Psoas muscle (tissue), 8 donors: ENCODE measurements at regions of chr17 and their contacts with region 1.

Region 1: GRCh38 chr17:63600569-63601438 is at the start of gene TACO1:
- DNase-seq: peak; percentile 84 to 90
- ATAC-seq: peak; percentile 96 to 97 (median 97)
- H3K4me3 ChIP-seq: peak within 1 kb of the TSS; percentile 98
- H3K27ac ChIP-seq: peak within 1 kb of the TSS; percentile 94
- H3K4me1 ChIP-seq: peaks cover 10% of the 10 kb centered on the region
- H3K27me3 ChIP-seq: no peaks in the 10 kb centered on the region
- CTCF ChIP-seq: no peak
- total RNA-seq, gene TACO1: 28.6 to 45.5 (median 41.5) TPM

Region 2: GRCh38 chr17:63445979-63446691 is 154.7 kb before region 1 on chr17 and contains the start of gene CYB561:
- intact Hi-C with region 1: loop called in 1 of 2 experiments (anchors 5 kb)
- DNase-seq: peak; percentile 81 to 88
- ATAC-seq: peak; percentile 73 to 84 (median 78)
- H3K4me3 ChIP-seq: peak within 1 kb of the TSS; percentile 80
- H3K27ac ChIP-seq: peak within 1 kb of the TSS; percentile 82
- H3K4me1 ChIP-seq: peaks cover 8% of the 10 kb centered on the region
- H3K27me3 ChIP-seq: peaks cover 0 to 14% (median 4%) of the 10 kb centered on the region in 3 donors
- CTCF ChIP-seq: peak; percentile 52
- total RNA-seq, gene CYB561: 1.5 to 4.2 (median 2.5) TPM

Region 3: DNA sequence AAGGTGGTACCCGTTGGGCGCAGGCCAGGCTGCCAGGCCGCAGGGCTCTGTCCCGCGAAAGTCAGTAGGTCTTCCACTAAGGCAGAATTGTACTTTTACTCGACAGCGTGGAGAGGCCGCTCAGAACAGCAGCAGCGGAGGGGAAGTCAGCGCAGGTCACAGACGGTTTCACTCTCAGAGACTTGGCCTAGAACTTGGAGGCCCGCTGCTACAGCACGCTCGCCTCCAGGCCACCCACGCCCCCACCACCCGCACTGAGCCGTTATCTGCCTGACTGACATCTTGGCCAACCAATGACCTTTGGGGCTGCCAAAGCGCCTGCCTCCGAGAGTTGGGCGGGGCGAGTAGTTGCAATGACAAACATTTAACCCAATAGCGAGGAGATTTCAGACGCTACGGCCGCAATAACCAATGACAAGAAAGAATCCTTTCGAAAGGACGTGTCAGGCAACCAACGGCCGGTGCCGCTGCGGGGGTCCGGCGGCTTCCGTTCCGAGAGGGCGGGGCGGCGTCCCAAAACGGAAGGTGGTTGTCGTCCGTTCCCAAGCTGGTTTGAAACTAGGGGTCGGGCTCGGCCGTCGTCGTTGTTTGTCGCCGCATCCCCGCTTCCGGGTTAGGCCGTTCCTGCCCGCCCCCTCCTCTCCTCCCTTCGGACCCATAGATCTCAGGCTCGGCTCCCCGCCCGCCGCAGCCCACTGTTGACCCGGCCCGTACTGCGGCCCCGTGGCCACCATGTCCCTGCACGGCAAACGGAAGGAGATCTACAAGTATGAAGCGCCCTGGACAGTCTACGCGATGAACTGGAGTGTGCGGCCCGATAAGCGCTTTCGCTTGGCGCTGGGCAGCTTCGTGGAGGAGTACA is 50.6 kb before region 1 on chr17 and contains the start of gene DCAF7:
- intact Hi-C with region 1: loop called in 1 of 2 experiments (anchors 5 kb)
- DNase-seq: peak; percentile 99 to 100
- ATAC-seq: peak; percentile 97 to 99 (median 98)
- H3K4me3 ChIP-seq: peak within 1 kb of the TSS; percentile 94
- H3K27ac ChIP-seq: peak within 1 kb of the TSS; percentile 93
- H3K4me1 ChIP-seq: peaks cover 42% of the 10 kb centered on the region
- H3K27me3 ChIP-seq: no peaks in the 10 kb centered on the region
- CTCF ChIP-seq: no peak
- total RNA-seq, gene DCAF7: 24.0 to 30.2 (median 27.6) TPM

Region 4: DNA sequence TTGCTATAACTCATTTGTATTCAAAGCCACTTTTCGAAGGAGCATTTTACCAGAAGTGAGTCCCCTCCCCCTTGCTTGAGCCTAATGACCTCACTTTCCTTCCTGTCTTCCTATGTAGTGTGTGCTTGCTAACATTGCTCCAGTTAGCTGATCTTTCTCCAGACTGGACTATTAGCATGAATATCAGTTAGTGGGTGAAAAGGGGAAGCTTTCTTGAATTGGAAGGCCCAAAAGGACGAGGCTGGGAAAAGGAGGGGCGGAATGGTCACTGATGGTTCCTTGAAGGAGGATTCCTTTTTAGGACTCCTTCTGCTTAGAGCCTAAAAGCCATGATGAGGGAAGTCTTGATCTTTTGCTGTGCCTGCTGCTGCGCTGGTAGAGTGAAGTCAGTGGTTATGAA is 33.4 kb after region 1 on chr17:
- intact Hi-C with region 1: no loop called
- DNase-seq: no peak
- ATAC-seq: peak in 1 of 4 donors; percentile 28
- H3K4me3 ChIP-seq: no peak overlapping the region
- H3K27ac ChIP-seq: peak overlapping the region; percentile 56
- H3K4me1 ChIP-seq: peaks cover 42% of the 10 kb centered on the region
- H3K27me3 ChIP-seq: no peaks in the 10 kb centered on the region
- CTCF ChIP-seq: no peak